Activated CD4-positive, alpha-beta memory T cell treated with anti-CD3 and anti-CD28 coated beads for 36 hours (primary cell): ENCODE measurements at regions of chr4 and their contacts with region 1.

Region 1: GRCh38 chr4:103091601-103092223 is 7.9 kb downstream of the BDH2 start:
- DNase-seq: peak; percentile 36
- H3K4me3 Mint-ChIP-seq: no peak overlapping the region
- H3K27ac Mint-ChIP-seq: no peak overlapping the region
- H3K4me1 Mint-ChIP-seq: peaks cover 14% of the 10 kb centered on the region
- H3K27me3 Mint-ChIP-seq: no peaks in the 10 kb centered on the region

Region 2: DNA sequence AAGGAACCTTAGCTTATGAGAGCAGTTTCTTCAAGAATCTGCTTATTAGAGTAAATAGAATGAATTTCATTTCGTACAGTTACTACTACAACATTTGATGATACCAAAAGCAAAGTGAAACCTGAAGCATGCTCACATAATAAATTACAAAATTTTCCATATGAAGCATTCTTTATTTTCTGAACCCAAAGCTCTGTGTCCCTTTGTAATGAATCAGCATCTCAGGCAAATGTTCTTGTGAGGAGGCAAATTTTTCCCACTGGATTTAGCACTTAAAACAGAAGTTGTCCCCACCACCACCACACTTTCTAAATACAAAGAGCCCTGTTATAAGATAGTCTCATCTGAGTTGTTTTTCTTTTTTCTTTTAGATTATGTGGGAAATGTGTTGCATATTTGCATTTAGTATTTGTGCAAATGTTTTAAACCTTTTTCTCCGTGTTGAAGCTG is 661.2 kb before region 1 on chr4:
- CTCF ChIA-PET with region 1: interaction called, 6 read pairs
- POLR2A ChIA-PET with region 1: no interaction called
- intact Hi-C with region 1: loop called (anchors 1 kb)
- DNase-seq: no peak
- H3K4me3 Mint-ChIP-seq: peak overlapping the region; percentile 82
- H3K27ac Mint-ChIP-seq: peak overlapping the region; percentile 62
- H3K4me1 Mint-ChIP-seq: peaks cover 8% of the 10 kb centered on the region
- H3K27me3 Mint-ChIP-seq: no peaks in the 10 kb centered on the region

Region 3: GRCh38 chr4:102449751-102450352 is 641.9 kb before region 1 on chr4:
- CTCF ChIA-PET with region 1: interaction called, 11 read pairs
- POLR2A ChIA-PET with region 1: no interaction called
- intact Hi-C with region 1: loop called (anchors 5 kb)
- DNase-seq: peak; percentile 61
- H3K4me3 Mint-ChIP-seq: no peak overlapping the region
- H3K27ac Mint-ChIP-seq: peak overlapping the region; percentile 4
- H3K4me1 Mint-ChIP-seq: peaks cover 43% of the 10 kb centered on the region
- H3K27me3 Mint-ChIP-seq: no peaks in the 10 kb centered on the region

Region 4: DNA sequence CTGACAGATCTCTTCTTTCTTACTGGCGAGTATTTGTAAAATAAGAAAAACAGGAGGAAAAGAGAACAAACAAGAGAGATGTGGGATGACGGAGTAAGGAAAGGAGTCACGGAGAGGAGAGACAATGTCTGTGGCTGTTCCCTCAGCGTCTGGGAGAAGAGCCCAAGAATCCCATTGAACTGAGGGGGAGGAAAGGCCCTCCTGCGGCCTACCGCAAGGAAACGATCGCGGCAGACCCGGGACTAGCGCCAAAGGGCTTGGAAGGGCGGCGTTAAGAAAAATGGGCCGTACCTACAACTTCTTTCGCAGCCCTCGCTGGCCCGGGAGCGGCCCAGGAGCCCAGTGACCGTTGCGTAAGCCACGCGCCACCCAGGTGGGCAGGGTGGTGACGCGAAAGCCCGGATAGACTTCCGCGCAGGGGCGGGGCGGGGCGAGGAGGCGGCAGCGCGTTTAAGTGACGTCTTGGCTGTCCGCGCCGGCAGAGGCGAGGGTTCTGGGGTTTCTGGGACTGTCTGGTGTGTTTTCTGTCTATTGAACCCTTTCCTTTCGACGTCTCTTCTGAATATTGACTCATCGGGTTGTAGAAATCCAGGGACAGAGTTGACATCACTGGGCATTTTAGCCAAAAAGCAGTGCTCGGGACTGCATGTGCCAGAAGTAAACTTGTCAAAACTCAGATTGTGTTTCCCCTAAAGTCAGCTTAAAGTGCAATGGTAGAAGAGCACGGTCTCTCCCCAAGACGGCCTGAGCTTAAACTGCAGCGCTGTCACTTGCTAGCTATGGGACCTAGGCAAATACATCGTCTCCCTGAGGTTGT is 72.2 kb before region 1 on chr4 and contains the start of gene SLC9B1:
- CTCF ChIA-PET with region 1: interaction called, 3 read pairs
- POLR2A ChIA-PET with region 1: no interaction called
- intact Hi-C with region 1: loop called (anchors 1 kb)
- DNase-seq: peak; percentile 97
- H3K4me3 Mint-ChIP-seq: peak within 1 kb of the TSS; percentile 84
- H3K27ac Mint-ChIP-seq: peak within 1 kb of the TSS; percentile 92
- H3K4me1 Mint-ChIP-seq: peaks cover 15% of the 10 kb centered on the region
- H3K27me3 Mint-ChIP-seq: no peaks in the 10 kb centered on the region
- total RNA-seq, gene SLC9B1: 1.9 to 2.4 TPM

Region 5: DNA sequence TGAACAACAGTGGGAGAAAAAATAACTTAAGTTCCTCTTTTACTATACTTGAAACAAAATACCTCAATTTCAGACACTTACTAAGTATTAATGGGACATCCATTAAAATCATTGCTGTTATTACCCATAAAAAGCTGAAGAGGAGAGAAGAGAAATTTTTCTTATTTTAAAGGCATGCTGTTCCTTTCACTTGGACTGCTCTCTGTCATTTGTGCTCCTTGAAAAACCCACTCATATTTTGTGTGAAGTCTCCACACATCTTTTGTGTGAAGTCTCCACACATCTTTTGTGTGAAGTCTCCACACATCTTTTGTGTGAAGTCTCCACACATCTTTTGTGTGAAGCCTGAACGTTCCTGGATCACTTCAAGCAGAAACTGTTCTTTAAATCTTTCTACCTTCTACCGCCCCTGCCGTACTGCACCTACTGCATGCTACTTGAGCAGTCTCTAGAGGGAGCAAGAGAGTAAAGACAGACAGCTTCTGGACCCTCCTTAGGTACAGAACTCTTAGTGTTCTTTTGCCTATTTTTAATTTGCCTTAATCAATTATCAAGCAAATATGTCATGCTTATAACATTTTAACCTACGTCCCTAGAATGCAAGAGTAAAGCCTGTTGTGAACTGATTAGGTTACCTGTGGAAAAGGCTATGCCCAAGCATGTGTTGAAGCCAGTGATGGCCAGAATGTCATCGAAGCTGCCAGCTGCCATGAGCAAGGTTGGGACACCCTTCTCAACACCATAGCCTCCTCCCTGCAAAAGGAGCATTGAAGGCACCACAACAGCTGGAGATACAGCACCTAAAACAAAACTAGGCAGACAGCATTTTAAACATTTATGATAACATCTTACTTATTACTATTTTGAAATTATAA is 45.1 kb before region 1 on chr4:
- CTCF ChIA-PET with region 1: interaction called, 65 read pairs
- POLR2A ChIA-PET with region 1: no interaction called
- intact Hi-C with region 1: loop called (anchors 1 kb)
- DNase-seq: peak; percentile 40
- H3K4me3 Mint-ChIP-seq: no peak overlapping the region
- H3K27ac Mint-ChIP-seq: no peak overlapping the region
- H3K4me1 Mint-ChIP-seq: peaks cover 10% of the 10 kb centered on the region
- H3K27me3 Mint-ChIP-seq: no peaks in the 10 kb centered on the region

Region 6: DNA sequence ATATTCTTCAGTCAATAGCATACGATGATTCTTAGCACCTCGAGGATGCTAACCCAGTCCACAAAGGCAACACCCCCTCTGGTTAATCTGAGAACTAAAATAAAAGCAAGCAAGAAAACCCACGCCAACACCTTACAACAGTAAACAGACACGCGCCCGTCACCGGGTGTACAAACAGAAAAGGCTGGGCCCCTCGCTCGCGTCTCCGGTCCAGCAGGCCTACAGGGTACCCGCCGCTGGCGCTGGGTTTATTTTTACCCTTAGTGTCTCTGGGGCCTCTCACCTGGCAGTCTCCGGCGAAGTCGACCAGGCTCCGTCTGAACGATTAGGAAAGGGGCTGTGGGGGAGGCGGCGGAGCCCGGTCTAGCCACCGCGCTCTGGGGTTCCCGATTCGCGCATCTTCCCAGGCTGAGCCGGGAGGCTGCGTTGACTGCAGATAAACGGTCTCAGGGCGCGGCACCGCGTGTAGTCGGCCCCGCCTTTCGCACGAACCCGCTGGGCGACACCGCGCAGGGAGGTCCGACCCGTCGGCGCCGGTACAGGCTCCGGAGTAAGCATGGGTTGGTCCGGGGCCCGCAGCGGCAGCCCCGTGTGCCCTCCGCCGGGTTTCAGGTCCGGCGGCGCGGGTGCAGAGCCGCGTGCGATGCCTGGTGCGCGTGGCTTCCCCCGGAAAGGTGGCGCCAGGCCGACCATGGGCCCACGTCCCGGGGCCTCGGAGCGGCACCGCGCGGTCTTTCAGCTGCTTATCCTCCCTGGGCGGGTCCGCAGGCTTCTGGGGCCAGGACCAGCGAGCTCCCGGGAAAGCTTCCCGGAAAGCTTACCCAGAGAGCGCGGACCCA is 15.6 kb before region 1 on chr4:
- CTCF ChIA-PET with region 1: interaction called, 23 read pairs
- POLR2A ChIA-PET with region 1: interaction called, 9 read pairs
- intact Hi-C with region 1: no loop called
- DNase-seq: peak; percentile 72
- H3K4me3 Mint-ChIP-seq: peak overlapping the region; percentile 79
- H3K27ac Mint-ChIP-seq: peak overlapping the region; percentile 99
- H3K4me1 Mint-ChIP-seq: peaks cover 42% of the 10 kb centered on the region
- H3K27me3 Mint-ChIP-seq: no peaks in the 10 kb centered on the region